ENCODE measurements at regions of chr16 and their contacts with region 1.

Region 1: DNA sequence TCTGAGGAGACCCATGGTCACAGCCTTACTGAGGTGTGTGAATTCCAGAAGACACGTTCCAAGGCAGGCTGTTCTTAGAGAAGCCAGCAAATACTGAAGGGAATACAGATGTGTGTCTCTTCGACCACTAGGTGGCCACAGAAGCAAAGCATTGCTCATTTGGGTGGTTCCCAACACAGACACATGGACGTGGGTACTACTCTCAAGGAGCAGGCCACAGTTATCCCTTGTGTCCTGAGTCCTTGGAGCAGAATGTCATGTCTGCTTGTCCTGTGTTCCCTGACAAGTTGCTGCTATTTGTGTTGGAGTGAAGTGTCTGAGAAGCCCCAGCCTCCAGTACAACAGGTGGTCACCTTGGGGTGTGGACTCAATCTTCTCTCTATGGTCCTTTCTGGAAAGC is 30.3 kb downstream of the HMOX2 start:
- H3K4me3 Mint-ChIP-seq: no peak overlapping the region
- H3K27ac Mint-ChIP-seq: peak overlapping the region; percentile 21
- H3K4me1 Mint-ChIP-seq: peaks cover 55% of the 10 kb centered on the region
- H3K27me3 Mint-ChIP-seq: no peaks in the 10 kb centered on the region

Region 2: DNA sequence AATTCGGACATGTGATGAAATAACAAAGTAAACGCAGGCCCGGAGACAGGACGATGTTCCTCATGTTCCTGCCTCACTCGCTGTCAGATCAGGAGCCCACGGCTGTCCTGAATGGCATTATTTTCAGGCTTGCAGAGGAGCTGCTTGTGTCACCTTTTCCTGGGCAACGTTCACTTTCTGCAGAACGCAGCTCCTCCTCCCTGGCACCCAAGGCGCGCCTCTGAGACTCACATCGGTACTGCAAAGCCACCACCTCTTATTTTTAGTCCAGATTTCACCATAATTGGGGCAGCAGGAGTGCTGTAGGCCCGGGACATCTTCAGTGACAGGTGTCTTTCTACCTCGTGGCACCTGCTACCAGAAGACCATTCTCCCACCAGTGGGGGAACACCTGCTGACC is 41.7 kb after region 1 on chr16:
- intact Hi-C with region 1: loop called (anchors 1 kb)
- H3K4me3 Mint-ChIP-seq: no peak overlapping the region
- H3K27ac Mint-ChIP-seq: no peak overlapping the region
- H3K4me1 Mint-ChIP-seq: no peaks in the 10 kb centered on the region
- H3K27me3 Mint-ChIP-seq: peaks cover 7% of the 10 kb centered on the region

Region 3: DNA sequence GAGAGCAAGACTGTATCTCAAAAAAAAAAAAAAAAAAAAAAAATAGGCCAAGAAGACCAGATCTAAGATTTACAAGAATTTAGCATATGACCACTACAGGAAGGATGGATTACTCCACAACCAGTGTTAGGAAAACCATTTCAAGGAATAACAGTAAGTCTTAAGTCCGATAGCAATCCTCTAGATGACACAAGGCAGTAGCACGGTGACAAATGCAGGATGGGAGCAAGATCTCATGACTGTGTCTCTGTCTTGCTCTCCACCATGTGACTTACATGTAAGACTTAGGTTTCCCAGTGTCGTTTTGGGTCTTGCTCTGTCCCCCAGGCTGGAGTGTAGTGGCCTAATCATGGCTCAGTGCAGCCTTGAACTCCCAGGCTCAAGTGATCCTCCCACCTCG is 77.5 kb after region 1 on chr16:
- intact Hi-C with region 1: loop called (anchors 2 kb)
- H3K4me3 Mint-ChIP-seq: no peak overlapping the region
- H3K27ac Mint-ChIP-seq: no peak overlapping the region
- H3K4me1 Mint-ChIP-seq: peaks cover 4% of the 10 kb centered on the region
- H3K27me3 Mint-ChIP-seq: peaks cover 21% of the 10 kb centered on the region

Region 4: DNA sequence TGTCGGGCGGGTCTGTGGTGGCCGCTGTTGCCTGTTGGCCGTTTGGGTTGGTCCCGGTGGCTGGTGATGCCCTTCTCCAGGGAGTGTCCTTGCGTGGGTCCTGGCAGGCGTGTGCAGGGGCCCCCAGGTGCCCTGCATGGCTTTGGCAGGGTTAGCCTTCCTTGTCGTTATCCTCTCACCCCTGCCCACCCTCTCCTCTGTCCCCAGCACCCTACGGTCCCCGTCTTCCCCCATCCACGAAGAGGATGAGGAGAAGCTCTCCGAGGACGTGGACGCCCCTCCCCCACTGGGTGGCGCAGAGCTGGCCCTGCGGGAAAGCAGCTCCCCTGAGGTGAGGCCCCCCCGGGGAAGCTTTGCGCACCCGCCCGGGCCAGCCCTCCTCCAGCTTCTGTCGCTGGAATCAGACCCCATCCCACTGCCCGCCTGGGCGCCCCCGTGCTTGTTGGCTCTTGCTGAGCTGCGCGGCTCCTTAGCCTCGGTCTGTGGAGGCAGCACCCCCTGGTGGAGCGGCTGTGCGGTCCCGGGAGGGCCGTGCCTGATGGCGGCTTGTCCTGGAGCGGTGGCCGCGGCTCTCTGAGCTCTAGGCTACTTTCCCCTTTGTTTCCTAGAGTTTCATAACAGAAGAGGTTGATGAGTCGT is 176.3 kb after region 1 on chr16:
- intact Hi-C with region 1: loop called (anchors 5 kb)
- H3K4me3 Mint-ChIP-seq: peak overlapping the region; percentile 45
- H3K27ac Mint-ChIP-seq: peak overlapping the region; percentile 64
- H3K4me1 Mint-ChIP-seq: peaks cover 66% of the 10 kb centered on the region
- H3K27me3 Mint-ChIP-seq: no peaks in the 10 kb centered on the region

Measured in dendritic cell treated with granulocyte-macrophage colony-stimulating factor and Interleukin-4, amounts not matched to agents 40 ng/mL and 50 ng/mL, for 4 days (primary cell).